Heart right ventricle (tissue), 16 donors: ENCODE measurements at regions of chr2 and their contacts with region 1.

Region 1: DNA sequence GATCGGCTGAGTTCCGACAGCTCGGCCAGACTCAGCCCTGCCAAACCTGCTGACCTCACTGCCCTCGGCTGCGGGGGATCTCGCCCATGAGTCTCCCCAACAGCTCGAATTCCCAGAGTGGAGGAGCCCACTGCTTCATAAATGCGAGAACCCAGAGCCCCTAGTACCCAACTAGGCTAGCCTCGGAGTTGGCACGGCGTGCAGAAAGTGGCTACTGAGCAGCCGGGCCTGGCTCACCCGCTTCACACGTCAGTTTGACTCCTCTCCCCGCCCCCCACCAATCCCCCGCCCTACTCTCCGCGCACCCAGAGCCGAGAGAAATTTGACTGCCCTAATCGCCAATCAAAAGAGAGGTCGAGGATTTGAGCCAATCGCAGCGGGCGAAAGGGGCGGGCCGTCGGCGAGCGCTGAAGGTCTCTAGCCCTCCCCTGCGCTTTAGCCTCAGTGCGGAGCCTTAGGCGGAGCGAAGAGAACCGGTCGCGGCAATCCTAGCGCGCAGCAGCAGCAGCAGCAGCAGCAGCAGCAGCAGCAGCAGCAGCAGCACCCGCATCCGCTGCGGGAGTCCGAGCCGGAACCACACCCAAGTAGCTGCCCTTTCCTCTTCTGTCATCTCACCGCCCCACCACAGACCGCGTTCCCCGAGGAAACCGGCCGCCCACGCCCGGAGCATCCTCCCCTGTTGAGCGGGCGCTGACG is at the start of gene GLS:
- DNase-seq: peak; percentile 96 to 98
- ATAC-seq: peak; percentile 95 to 98 (median 96)
- H3K4me3 ChIP-seq: peak within 1 kb of the TSS; percentile 65 to 95 (median 89)
- H3K27ac ChIP-seq: peak within 1 kb of the TSS; percentile 90 to 98 (median 96)
- H3K4me1 ChIP-seq: peaks cover 0 to 56% (median 37%) of the 10 kb centered on the region in 9 donors
- H3K27me3 ChIP-seq: no peaks in the 10 kb centered on the region
- CTCF ChIP-seq: no peak
- total RNA-seq, gene GLS: 40.8 to 73.5 (median 59.2) TPM

Region 2: GRCh38 chr2:190979906-190980629 is 99.5 kb after region 1 on chr2:
- intact Hi-C with region 1: loop called in 1 of 10 experiments (anchors 10 kb)
- DNase-seq: peak; percentile 78 to 83
- ATAC-seq: peak; percentile 85 to 97 (median 94)
- H3K4me3 ChIP-seq: peak overlapping the region in 3 of 10 donors; percentile 6 to 26 (median 14)
- H3K27ac ChIP-seq: peak overlapping the region; percentile 37 to 88 (median 69)
- H3K4me1 ChIP-seq: peaks cover 0 to 50% (median 29%) of the 10 kb centered on the region in 9 donors
- H3K27me3 ChIP-seq: no peaks in the 10 kb centered on the region
- CTCF ChIP-seq: peak in 1 of 9 donors; percentile 20

Region 3: DNA sequence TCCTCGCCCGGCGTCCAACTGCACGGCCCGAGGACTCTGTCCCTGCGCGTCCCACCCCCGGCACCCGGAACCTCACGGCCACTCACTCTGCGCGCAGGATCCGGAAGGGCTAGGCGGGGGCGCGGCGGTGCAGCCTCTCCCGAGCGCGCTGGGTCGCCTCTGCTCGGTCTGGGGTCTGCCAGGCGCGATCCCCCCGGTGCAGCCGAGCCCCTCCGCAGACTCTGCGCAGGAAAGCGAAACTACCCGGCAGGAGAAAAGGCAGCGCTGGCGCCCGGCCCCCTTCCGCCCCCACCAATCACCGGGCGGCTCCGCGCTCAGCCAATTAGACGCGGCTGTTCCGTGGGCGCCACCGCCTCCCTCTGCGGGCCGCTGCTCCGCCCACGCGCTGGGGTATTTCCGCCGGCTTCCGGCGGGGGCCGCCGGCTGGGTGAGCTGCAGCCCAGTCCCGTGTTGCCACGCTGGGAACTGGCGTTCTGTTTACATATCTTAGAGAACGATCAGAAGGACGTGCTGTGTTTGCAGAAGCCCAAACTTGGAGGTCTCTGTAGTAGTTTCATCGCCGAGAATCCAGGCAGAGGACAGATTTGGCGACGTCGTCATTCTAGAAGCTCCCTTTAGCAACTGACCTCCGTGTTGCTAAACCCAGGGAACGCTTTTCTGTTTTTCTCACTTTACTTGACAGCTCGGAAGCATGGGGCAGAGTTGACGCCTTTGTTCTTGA is 133.6 kb after region 1 on chr2 and contains the start of gene STAT1:
- intact Hi-C with region 1: loop called in 3 of 10 experiments (anchors 1 to 5 kb)
- DNase-seq: peak; percentile 93 to 96
- ATAC-seq: peak; percentile 96 to 98 (median 97)
- H3K4me3 ChIP-seq: peak within 1 kb of the TSS; percentile 67 to 98 (median 84)
- H3K27ac ChIP-seq: peak within 1 kb of the TSS; percentile 83 to 97 (median 93)
- H3K4me1 ChIP-seq: peaks cover 0 to 70% (median 32%) of the 10 kb centered on the region in 9 donors
- H3K27me3 ChIP-seq: no peaks in the 10 kb centered on the region
- CTCF ChIP-seq: peak in 6 of 9 donors; percentile 5 to 17 (median 10)
- total RNA-seq, gene STAT1: 35.9 to 438 (median 52.4) TPM